ENCODE measurements at regions of chr11 and their contacts with region 1.

Region 1: GRCh38 chr11:124070915-124071635 is 29.9 kb upstream of the OR10G7 start:
- DNase-seq: peak in 1 of 2 experiments; percentile 45
- H3K4me3 ChIP-seq: no peak overlapping the region
- H3K27ac ChIP-seq: no peak overlapping the region
- H3K4me1 ChIP-seq: no peaks in the 10 kb centered on the region
- H3K27me3 ChIP-seq: peaks cover 24% of the 10 kb centered on the region; the same call in 1 of the 2 replicates
- CTCF ChIP-seq: peak; percentile 85

Region 2: GRCh38 chr11:124194698-124195410 is 123.8 kb after region 1 on chr11:
- CTCF ChIA-PET with region 1: interaction called, 4 read pairs
- POLR2A ChIA-PET with region 1: no interaction called
- intact Hi-C with region 1: loop called (anchors 1 kb)
- DNase-seq: peak; percentile 12 to 49
- H3K4me3 ChIP-seq: no peak overlapping the region
- H3K27ac ChIP-seq: no peak overlapping the region
- H3K4me1 ChIP-seq: no peaks in the 10 kb centered on the region
- H3K27me3 ChIP-seq: 0 out of 2 replicates have a peak, but pooled peaks cover 2% of the 10 kb centered on the region
- CTCF ChIP-seq: peak; percentile 72

Region 3: DNA sequence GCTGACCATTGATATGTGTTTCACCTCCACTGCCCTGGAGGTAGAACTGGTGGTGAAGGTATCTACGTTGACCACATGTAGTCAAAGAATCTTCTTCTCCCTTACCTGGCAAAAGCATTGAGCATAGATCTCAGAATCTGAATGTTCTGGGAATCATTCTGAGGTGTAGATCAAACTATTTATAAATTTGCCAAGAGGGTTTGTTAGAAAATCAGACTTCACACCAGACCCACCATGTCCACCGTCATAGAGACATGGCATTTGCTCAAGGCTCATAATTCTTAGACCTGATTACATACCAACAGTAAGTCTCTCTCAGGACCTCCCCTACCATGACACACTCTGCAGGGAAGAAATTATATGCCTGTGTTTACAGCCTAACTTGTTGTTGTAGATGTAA is 313.3 kb after region 1 on chr11 and contains the start of gene OR8B2:
- CTCF ChIA-PET with region 1: no interaction called
- POLR2A ChIA-PET with region 1: interaction called, 10 read pairs
- intact Hi-C with region 1: no loop called
- DNase-seq: no peak
- H3K4me3 ChIP-seq: no peak within 1 kb of the TSS
- H3K27ac ChIP-seq: no peak within 1 kb of the TSS
- H3K4me1 ChIP-seq: no peaks in the 10 kb centered on the region
- H3K27me3 ChIP-seq: no peaks in the 10 kb centered on the region
- CTCF ChIP-seq: no peak
- total RNA-seq, gene OR8B2: not detected in 2 replicates

Region 4: DNA sequence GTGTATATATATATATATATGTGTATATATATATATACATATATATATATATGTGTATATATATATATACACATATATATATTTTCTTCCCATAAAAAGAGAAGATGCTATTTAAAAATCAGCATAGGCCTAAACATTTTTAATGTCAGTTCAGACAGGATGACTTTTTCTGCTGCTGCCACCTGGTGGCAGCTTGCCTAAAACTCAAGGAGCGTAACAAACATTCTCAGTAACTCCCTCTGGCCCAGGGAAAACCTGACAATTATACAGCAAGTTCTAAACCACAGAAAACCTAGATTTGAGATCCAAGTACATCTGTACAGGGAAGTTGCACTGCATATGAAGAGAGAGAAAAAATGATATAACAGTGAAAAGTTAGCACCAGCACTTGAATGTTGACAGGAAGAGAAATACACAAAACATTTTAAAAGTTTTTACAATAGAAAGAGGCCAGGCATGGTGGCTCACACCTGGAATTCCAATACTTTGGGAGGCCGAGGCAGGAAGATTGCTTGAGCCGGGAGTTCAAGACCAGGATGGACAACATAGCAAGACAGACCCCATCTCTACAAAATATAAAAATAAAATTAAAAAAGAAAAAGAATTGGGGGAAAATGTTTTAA is 515.3 kb after region 1 on chr11:
- CTCF ChIA-PET with region 1: interaction called, 3 read pairs
- POLR2A ChIA-PET with region 1: no interaction called
- intact Hi-C with region 1: loop called (anchors 5 kb)
- DNase-seq: peak in 1 of 2 experiments; percentile 34
- H3K4me3 ChIP-seq: no peak overlapping the region
- H3K27ac ChIP-seq: no peak overlapping the region
- H3K4me1 ChIP-seq: no peaks in the 10 kb centered on the region
- H3K27me3 ChIP-seq: peaks cover 42% of the 10 kb centered on the region
- CTCF ChIP-seq: peak; percentile 73

Measured in PC-9 (cell line).